Lower leg skin (tissue), 4 donors: ENCODE measurements at regions of chr5 and their contacts with region 1.

Region 1: GRCh38 chr5:149837680-149838269 is 106.8 kb downstream of the PDE6A start:
- DNase-seq: no peak
- H3K4me3 ChIP-seq: no peak overlapping the region
- CTCF ChIP-seq: no peak
- POLR2A ChIP-seq: no peak

Region 2: DNA sequence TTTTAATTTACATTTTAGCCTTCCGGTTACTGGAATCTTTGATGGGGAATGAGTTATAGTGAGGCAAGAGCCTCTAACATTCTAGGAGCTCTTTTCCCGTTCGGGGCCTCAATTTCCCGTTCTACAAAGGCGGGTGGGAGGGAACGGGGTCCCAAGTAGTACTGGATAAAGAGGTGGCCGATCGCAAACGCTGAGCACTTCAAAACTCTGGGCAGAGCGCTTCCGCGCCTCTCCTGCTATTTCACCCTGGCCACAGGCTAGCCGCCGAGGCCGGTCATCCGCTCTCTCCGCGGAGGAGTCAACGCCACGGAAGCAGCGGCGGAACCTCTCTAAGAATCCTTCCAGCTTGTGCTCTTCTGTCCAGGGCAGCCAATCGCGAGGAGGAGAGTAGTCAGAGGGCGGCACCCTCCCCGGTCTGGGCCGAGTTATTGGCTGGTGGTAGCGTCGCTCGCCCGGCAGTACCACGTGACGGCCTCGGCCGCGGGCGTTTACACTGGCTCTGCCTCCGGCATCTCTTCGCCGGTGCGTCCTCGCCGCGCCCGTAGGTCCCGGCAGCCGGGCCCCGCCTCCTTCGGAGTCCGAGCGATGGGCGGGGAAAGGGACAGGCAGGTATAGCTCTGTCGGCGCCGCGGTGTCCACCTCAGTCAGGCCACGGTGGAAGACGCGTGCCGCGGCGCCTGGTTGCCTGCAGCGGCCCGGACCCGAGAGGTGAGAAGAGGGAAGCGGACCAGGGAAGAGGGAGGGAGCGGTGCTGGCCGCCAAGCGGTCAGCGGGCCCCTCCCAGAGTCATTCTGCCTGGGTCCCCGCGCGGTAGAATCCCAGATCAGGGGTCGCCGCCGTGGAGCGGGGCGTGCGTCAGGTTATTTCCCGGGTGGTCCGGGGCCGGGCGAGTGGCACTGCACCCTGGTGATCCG is 122.8 kb after region 1 on chr5 and contains the start of gene SLC26A2:
- intact Hi-C with region 1: loop called (anchors 5 kb)
- DNase-seq: peak; percentile 97 to 99
- H3K4me3 ChIP-seq: peak within 1 kb of the TSS; percentile 62
- CTCF ChIP-seq: no peak
- POLR2A ChIP-seq: peak in 1 of 2 donors; percentile 51
- total RNA-seq, gene SLC26A2: 8.4 to 56.5 (median 33.3) TPM

Region 3: GRCh38 chr5:149990518-149991376 is 153.0 kb after region 1 on chr5:
- intact Hi-C with region 1: loop called (anchors 5 kb)
- DNase-seq: peak; percentile 74 to 92
- H3K4me3 ChIP-seq: no peak overlapping the region
- CTCF ChIP-seq: peak in 1 of 3 donors; percentile 78
- POLR2A ChIP-seq: no peak